ENCODE measurements at regions of chr5 and their contacts with region 1.

Region 1: DNA sequence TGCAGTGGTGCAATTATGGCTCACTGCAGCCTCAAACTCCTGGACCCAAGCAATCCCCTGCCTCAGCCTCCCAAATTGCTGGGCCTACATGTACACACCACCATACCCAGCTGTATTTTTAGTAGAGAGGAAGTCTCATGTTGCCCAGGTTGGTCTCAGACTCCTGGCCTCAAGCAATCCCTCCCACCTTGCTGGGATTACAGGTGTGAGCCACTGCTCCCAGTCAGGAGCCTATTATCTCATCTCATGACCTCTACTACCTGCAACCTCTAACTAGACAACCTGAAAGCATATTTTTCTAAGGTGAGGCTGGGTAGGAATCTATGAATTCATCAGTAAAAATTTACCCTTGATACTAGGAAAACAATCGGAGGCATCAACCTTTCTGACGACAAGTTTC is 10.0 kb downstream of the FAM13B start:
- DNase-seq: no peak
- H3K4me3 ChIP-seq: no peak overlapping the region
- H3K27ac ChIP-seq: no peak overlapping the region
- H3K4me1 ChIP-seq: peaks cover 5% of the 10 kb centered on the region
- CTCF ChIP-seq: no peak

Region 2: GRCh38 chr5:137792303-137792702 is 230.6 kb before region 1 on chr5:
- CTCF ChIA-PET with region 1: no interaction called
- POLR2A ChIA-PET with region 1: no interaction called
- intact Hi-C with region 1: no loop called
- DNase-seq: no peak
- H3K4me3 ChIP-seq: no peak overlapping the region
- H3K27ac ChIP-seq: no peak overlapping the region
- H3K4me1 ChIP-seq: no peaks in the 10 kb centered on the region
- CTCF ChIP-seq: no peak

Region 3: GRCh38 chr5:138011991-138012390 is 10.9 kb before region 1 on chr5:
- CTCF ChIA-PET with region 1: no interaction called
- POLR2A ChIA-PET with region 1: interaction called, 10 read pairs
- intact Hi-C with region 1: no loop called
- DNase-seq: no peak
- H3K4me3 ChIP-seq: no peak overlapping the region
- H3K27ac ChIP-seq: no peak overlapping the region
- H3K4me1 ChIP-seq: no peaks in the 10 kb centered on the region
- CTCF ChIP-seq: no peak

Region 4: DNA sequence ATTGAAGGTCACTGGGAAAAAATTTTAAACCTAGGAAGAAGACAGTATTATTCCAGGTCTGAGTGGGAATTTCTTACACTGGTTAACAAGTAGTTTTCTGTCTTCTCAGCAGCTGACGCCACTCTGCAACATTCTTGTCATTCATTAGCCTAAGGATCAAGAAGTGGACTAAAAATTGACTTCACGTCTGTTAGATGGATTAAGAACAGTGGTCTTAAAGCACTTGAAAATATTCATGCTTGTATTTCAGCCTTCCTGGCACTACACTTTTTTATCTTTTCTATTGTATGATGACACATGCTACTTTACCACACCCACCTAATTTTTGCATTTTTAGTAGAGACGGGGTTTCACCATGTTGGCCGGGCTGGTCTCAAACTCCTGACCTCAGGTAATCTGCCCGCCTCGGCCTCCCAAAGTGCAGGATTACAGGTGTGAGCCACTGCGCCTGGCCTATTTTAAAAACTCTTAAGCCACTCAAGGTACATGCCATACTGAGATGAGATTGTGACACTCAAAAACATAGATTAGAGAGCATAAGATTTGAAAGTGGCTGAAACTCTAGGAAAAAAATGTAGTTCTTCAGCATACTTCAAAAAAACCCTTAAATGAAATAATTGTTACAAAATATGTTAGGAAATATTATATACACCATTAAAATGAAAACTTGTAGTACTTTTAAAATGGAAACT is 1279.1 kb after region 1 on chr5:
- CTCF ChIA-PET with region 1: no interaction called
- POLR2A ChIA-PET with region 1: no interaction called
- intact Hi-C with region 1: no loop called
- DNase-seq: no peak
- H3K4me3 ChIP-seq: no peak overlapping the region
- H3K27ac ChIP-seq: no peak overlapping the region
- H3K4me1 ChIP-seq: peaks cover 94% of the 10 kb centered on the region
- CTCF ChIP-seq: no peak